ENCODE measurements at regions of chr19 and their contacts with region 1.

Region 1: GRCh38 chr19:18557474-18558201 is at the start of gene KXD1:
- DNase-seq: peak; percentile 100
- ATAC-seq: peak; percentile 99
- H3K4me3 Mint-ChIP-seq: peak within 1 kb of the TSS; percentile 89
- H3K27ac Mint-ChIP-seq: peak within 1 kb of the TSS; percentile 94
- H3K4me1 Mint-ChIP-seq: peaks cover 24% of the 10 kb centered on the region
- H3K27me3 Mint-ChIP-seq: no peaks in the 10 kb centered on the region
- total RNA-seq, gene KXD1: 106 to 113 TPM

Region 2: DNA sequence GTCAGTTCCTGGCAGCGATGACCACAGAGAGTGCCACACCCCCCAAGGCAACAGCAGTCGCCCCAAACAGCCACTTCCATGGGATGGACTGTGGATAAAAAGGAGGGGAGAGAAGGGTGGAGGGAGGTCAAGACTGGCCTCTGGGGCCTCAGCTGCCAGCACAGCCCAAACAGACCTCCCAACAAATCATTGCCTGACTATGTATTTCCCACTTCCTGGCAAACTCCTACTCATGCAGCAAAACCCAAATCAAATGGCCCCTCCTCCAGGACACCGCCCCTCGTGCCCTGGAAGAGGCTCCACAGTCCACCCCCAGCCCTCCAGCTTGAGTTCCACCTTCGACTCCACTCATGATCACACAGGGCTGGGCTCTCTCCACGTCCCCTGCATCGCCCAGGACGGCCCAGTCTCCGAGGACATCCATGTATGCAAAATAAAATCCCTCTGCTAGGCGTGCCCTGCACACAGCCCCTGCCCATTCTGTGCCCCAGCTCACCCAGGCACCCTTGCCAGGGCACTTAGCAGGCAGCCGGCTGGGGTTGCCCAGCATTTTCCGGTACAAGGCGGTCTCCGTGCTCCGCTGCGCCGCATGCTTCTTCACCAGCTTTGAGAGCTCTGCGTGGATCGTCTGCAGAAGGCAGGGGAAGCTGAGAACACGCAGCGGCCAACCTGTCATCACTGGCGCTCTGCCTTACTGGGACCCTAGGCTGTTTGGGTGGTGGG is 25.3 kb before region 1 on chr19:
- CTCF ChIA-PET with region 1: no interaction called
- DNase-seq: no peak
- ATAC-seq: peak; percentile 16
- H3K4me3 Mint-ChIP-seq: no peak overlapping the region
- H3K27ac Mint-ChIP-seq: no peak overlapping the region
- H3K4me1 Mint-ChIP-seq: no peaks in the 10 kb centered on the region
- H3K27me3 Mint-ChIP-seq: no peaks in the 10 kb centered on the region

Region 3: DNA sequence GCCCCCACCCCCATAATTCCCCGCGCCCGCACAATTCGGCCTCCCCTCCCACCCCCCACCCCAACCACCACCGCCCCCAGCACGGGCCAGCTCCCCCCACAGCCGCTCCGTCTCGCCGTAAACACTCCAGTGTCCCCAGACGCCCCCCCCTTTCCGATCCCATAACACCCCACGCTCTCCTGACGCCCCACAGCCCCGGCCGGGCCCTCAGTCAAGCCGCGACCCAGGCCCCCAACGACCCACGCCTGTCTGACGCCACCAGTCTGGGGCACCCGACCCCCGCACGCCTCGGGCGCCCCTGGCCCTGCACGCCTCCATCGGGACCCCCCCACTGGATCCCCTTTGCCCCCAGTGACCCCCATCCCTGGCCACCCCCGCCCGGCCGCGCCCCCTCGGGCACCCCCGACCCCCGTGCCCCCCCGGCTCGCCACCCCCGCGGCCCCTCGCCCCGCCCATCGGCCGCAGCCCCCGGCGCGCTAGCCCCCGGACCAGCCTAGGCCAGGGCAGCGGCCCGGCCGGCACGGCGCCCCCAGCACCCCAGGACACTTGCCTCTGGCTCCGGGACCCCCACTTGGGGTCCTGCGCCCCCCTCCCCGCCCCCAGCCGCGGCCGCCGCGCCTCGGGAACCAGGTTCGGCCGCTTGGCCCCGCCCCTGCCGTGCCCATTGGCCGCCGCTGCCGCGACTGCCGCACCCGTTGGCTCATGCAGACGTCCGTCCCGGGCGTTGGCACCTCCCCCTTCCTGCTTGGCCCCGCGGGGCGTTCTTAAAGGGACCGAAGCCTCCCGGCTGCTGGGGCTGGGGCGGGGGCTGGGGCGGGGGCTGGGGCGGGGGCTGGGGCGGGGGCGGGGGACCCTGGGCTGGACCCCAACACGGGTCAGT is 14.5 kb before region 1 on chr19 and contains the start of gene FKBP8:
- CTCF ChIA-PET with region 1: interaction called, 48 read pairs
- DNase-seq: peak; percentile 97
- ATAC-seq: peak; percentile 97
- H3K4me3 Mint-ChIP-seq: peak within 1 kb of the TSS; percentile 88
- H3K27ac Mint-ChIP-seq: peak within 1 kb of the TSS; percentile 98
- H3K4me1 Mint-ChIP-seq: peaks cover 27% of the 10 kb centered on the region
- H3K27me3 Mint-ChIP-seq: no peaks in the 10 kb centered on the region
- total RNA-seq, gene FKBP8: 220 to 286 TPM

Region 4: GRCh38 chr19:18603255-18603957 is 45.8 kb after region 1 on chr19:
- CTCF ChIA-PET with region 1: no interaction called
- DNase-seq: peak; percentile 52
- ATAC-seq: peak; percentile 60
- H3K4me3 Mint-ChIP-seq: no peak overlapping the region
- H3K27ac Mint-ChIP-seq: no peak overlapping the region
- H3K4me1 Mint-ChIP-seq: no peaks in the 10 kb centered on the region
- H3K27me3 Mint-ChIP-seq: peaks cover 52% of the 10 kb centered on the region

Region 5: DNA sequence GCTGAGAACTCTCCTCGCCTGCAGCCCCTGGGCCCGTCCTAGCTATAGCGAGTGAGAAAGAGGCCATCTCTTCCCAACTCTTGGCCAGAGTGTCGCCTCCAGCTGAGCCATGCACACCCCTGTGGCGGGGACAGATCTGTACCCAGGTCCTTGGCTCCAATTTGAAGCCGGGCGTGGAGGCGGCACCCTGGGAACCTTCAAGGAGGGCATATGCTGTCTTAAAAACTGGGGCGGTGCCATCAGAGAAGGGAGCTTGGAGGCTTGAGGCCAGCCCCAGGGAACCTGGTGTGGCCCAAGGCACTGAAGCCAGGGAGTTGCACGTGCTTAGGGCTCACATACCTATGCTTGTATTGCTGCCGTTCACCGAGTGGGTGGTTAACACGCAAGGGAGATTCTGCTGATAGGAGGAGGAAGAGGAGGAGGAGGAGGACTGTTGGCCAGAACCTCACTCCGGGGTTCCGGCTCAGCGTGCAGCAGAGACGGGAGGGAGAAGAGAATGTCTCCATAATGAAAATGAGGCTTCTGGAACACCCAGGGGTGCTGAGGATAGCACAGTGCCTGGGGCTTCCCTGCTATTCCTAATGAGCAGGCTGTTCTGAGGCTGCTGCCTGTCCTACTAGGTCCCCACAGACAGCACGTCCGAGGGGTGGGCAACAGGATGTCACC is 192.8 kb after region 1 on chr19:
- CTCF ChIA-PET with region 1: no interaction called
- DNase-seq: no peak
- ATAC-seq: no peak
- H3K4me3 Mint-ChIP-seq: no peak overlapping the region
- H3K27ac Mint-ChIP-seq: no peak overlapping the region
- H3K4me1 Mint-ChIP-seq: no peaks in the 10 kb centered on the region
- H3K27me3 Mint-ChIP-seq: no peaks in the 10 kb centered on the region

Measured in activated CD8-positive, alpha-beta memory T cell treated with anti-CD3 and anti-CD28 coated beads, Interleukin-2, amount 10 ng/mL, durations not matched to agents 7 days and 5 days (primary cell).